ENCODE measurements at regions of chr3 and their contacts with region 1.

Region 1: DNA sequence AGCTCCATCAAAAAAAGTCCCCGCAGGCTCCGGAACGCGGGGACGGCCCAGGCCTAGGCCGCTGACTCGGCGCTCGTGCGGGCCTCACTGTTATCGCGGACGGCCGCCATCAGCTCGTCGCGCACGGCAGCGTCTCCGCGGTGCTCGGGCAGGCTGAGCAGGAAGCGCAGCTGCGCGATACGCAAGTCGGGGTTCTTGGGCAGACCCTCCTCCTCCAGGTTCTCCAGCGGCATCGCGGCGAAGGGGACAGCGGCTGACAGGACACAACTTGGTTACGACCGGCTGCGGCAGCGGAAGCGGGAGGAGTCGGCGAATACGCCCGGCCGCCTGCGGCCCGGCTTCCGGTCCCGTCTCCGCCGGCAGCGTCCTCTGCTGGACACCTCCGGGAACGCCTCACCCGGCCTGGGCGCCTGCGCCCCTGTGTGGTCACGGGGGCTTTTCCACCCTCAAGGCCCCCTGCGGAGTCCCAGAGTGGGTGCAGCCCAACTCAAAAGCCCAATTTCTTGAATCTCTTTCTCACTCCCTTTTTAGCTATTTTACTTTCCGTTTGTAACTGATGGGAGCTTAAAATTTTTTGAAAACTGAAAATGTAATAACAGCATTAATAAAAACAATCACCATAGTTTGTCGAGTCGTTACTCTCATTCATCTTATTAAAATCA is at the start of gene PSMD6:
- DNase-seq: peak; percentile 92
- ATAC-seq: peak; percentile 91
- H3K4me3 Mint-ChIP-seq: peak within 1 kb of the TSS; percentile 92
- H3K27ac Mint-ChIP-seq: peak within 1 kb of the TSS; percentile 93
- H3K4me1 Mint-ChIP-seq: peaks cover 30% of the 10 kb centered on the region
- H3K27me3 Mint-ChIP-seq: peaks cover 15% of the 10 kb centered on the region
- total RNA-seq, gene PSMD6: 68.0 to 94.9 TPM

Region 2: DNA sequence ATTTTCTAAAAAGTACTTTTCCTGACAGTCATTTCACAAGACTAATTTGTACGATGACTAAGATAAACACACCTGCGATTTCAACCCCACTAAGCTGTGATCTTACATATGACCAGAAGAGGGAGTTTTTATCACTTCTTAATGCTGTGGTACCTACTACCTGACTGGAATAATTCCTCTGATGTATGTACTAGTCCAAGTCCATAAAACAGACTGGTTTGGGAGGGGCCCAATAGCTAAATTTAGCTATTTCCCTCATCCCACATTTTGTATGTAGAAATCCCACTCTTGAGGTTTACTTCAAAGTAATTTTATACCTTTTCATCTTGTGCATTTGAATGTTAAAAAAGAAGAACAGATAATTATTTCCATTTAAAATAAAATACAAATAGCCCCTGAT is 61.4 kb before region 1 on chr3:
- CTCF ChIA-PET with region 1: interaction called, 16 read pairs
- DNase-seq: no peak
- ATAC-seq: peak; percentile 82
- H3K4me3 Mint-ChIP-seq: no peak overlapping the region
- H3K27ac Mint-ChIP-seq: no peak overlapping the region
- H3K4me1 Mint-ChIP-seq: peaks cover 53% of the 10 kb centered on the region
- H3K27me3 Mint-ChIP-seq: no peaks in the 10 kb centered on the region

Region 3: DNA sequence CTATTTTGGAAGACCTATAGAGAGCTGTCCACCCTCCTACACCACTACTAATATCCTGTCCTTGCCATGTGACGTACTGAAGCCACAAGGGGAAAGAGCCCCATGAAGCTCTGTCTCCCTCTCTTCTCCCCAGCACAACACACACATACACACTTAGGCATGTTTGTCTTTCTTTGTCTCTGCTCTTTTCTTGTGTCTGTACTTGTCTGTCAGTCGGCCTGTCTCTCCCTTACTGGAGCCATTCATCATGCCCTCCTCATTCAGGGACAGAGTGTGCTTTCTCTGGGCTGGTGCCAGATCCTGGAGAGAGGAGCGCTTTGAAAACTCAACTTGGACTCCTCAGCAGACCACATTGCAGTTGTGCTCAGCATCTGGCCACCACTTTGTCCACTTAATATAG is 47.6 kb before region 1 on chr3:
- CTCF ChIA-PET with region 1: interaction called, 18 read pairs
- DNase-seq: no peak
- ATAC-seq: no peak
- H3K4me3 Mint-ChIP-seq: no peak overlapping the region
- H3K27ac Mint-ChIP-seq: peak overlapping the region; percentile 30
- H3K4me1 Mint-ChIP-seq: peaks cover 94% of the 10 kb centered on the region
- H3K27me3 Mint-ChIP-seq: no peaks in the 10 kb centered on the region

Region 4: DNA sequence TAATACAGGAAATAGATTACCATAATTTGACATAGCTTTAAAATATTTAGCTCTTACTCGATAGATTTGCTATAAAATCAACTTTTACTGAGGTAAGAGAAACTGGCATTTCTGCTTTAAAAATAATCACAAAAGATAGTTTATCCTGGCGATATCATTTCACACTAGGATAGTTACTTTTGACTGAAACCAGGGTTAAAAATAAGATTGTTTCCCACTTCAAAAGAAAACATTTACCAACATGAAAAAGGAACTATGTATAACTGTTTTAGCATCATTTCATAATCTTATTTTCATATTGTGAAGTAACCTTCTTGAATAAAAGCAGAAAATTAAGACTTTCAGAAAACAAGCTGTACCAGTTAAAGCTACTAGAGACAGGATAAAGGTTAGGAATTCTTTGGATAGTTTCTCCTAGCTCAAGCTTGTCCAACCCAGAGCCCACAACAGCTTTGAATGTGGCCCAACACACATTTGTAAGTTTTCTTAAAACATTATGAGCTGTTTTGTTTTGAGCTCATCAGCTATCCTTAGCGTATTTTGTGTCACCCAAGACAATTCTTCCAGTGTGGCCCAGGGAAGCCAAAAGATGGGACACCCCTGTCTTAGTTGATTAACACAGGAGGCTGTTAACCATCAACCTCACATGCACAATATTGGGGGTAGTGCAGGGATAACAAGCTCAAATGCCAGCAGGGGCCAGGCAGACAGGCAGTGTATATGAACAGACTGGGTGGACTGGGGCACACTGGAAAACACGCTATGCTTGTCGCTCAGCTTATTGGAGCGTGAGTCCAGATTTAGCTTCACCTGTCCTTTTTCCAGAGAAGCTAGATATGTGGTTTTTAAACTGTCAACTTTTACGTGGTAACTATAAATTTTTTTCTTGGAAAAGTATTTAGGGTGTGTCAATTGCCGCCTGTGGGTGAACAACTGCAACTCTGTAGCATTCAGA is 15.0 kb before region 1 on chr3:
- CTCF ChIA-PET with region 1: interaction called, 15 read pairs
- DNase-seq: no peak
- ATAC-seq: no peak
- H3K4me3 Mint-ChIP-seq: no peak overlapping the region
- H3K27ac Mint-ChIP-seq: no peak overlapping the region
- H3K4me1 Mint-ChIP-seq: peaks cover 18% of the 10 kb centered on the region
- H3K27me3 Mint-ChIP-seq: no peaks in the 10 kb centered on the region

Measured in activated CD8-positive, alpha-beta memory T cell treated with anti-CD3 and anti-CD28 coated beads, Interleukin-2, amount 10 ng/mL, durations not matched to agents 7 days and 5 days (primary cell).